Heart right ventricle (tissue), 16 donors: ENCODE measurements at regions of chr12 and their contacts with region 1.

Region 1: DNA sequence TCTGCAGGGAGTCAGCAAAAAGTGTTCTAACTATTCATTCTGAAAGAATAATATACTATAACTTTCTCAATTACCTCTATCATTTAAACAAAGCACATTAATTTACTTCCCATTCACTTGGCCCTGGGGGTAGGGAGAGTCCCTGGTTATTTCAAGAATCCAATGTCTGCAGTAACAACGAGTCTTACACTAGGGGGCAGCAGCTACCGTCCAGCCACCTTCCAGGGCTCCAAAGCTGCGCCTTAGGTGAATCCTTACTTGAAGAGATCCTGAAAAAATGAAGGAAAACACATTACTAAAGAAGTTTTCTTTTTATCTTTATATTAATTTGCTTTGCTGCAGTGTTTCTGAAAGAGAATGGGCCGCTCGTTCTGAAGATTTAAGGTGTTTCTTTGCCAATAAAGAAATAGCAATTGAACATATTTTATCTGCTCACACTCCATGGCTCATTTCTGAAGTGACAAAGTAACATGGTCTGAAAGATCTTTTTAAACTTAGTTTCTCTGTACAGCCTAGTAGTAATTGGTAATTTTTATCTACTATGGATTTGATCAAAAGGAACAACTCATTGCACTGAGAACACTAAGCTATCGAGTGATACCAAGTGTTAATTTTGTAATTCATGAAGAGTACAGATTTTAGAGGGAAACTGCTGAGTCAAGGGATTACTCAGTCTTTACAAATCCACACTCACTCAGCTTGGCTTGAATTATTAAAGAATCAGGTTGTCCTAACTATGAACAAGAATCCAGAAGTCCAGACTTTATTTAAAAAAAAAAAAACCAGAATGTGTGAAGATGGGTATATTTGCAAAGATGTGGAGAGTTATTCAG is 27.6 kb downstream of the BHLHE41 start:
- DNase-seq: peak; percentile 59 to 78
- ATAC-seq: peak; percentile 89 to 98 (median 94)
- H3K4me3 ChIP-seq: no peak overlapping the region
- H3K27ac ChIP-seq: no peak overlapping the region
- H3K4me1 ChIP-seq: peaks cover 0 to 7% (median 0%) of the 10 kb centered on the region in 9 donors
- H3K27me3 ChIP-seq: no peaks in the 10 kb centered on the region
- CTCF ChIP-seq: peak; percentile 85 to 97 (median 95)

Region 2: DNA sequence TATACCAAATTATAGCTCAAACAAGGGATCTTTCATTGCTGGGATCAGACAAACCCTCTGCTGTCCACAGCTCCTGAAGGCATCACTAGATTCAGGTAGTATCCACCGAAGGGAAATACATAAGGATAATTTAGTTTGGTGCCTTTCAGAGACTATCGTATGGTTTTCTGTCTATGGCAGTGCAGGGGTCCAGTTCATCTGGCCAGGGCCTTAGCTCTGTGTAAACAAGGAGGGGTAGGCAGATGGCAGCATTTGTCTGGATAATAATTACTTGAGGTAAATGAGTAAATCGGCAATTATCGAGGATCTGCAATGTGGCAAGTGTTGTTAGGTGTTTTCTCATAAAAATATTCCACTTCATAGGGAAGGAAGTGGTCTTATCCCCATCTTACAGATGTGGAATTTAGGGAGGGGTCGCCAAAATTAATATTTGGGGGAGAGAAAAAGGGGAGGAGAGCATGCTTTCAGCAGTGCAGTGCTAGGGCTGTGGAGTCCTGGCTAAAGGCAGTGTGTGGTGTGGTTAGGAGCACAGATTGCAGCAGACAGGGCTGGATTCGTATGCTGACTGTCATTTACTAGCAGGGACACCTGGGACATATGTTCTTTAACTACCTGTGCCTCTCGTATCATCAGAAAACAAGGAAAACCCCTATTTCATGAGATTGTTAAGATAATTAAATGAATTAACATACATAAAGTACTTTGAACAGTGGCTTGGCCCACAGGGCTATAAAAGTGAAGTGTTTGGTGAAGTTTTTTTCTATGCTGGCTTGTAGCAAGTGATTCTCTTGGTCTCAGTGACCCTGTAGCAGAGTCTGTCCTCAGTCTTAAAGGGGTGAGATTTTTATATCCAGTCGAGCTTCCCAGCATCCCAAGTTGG is 111.7 kb before region 1 on chr12:
- intact Hi-C with region 1: no loop called
- DNase-seq: no peak
- ATAC-seq: no peak
- H3K4me3 ChIP-seq: no peak overlapping the region
- H3K27ac ChIP-seq: no peak overlapping the region
- H3K4me1 ChIP-seq: peaks cover 0 to 54% (median 11%) of the 10 kb centered on the region in 9 donors
- H3K27me3 ChIP-seq: no peaks in the 10 kb centered on the region
- CTCF ChIP-seq: no peak

Region 3: DNA sequence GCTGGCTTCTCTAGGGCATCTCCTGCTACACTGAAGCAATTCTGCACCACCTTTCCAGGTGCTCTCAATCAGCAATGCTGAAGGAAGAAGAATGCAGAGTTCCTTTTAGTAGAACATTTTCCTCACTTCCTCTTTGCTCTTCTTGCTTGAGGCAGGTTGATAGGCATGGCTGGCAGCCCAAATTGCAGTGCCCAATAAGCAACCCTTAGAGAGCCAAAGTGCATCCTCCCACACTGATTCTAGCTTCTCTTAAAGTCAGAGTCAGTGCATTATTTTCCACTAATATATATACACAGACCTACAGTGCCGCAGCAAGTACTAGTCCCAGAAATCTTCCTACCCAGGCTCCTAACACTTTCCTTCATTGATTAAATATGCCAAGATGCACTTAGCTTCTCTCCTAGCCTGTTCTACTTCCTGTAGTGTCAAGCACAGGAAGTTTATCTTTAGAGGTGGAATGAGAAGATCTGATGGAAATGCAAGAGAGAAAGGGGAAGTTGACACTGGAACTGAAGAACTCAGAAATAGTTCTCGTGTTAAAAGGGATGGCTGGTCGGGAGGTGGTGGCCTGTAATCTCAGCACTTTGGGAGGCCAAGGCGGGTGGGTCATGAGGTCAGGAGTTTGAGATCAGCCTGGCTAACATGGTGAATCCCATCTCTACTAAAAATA is 230.8 kb after region 1 on chr12:
- intact Hi-C with region 1: no loop called
- DNase-seq: no peak
- ATAC-seq: no peak
- H3K4me3 ChIP-seq: no peak overlapping the region
- H3K27ac ChIP-seq: no peak overlapping the region
- H3K4me1 ChIP-seq: peaks cover 0 to 20% (median 0%) of the 10 kb centered on the region in 9 donors
- H3K27me3 ChIP-seq: no peaks in the 10 kb centered on the region
- CTCF ChIP-seq: no peak

Region 4: DNA sequence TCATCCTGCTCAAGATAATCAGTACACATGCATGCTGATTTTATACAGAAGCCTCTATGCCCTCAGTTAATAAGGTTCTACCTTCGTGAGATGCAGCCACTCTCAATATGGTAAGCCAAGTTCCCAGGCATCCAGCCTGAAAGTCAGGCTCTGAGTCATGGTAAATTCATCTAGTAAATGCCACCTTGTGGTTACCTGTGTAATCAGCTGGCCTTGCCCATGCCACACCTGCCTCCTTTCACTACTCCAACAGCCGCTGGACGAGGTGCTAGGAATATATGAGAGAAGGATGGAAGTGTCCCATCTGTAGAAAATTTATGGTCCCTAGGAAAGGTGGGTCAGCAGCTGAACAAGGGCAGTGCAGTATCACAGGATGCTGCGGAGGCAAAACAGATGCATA is 305.4 kb after region 1 on chr12:
- intact Hi-C with region 1: loop called in 1 of 10 experiments (anchors 10 kb)
- DNase-seq: no peak
- ATAC-seq: peak in 1 of 8 donors; percentile 53
- H3K4me3 ChIP-seq: no peak overlapping the region
- H3K27ac ChIP-seq: no peak overlapping the region
- H3K4me1 ChIP-seq: no peaks in the 10 kb centered on the region
- H3K27me3 ChIP-seq: no peaks in the 10 kb centered on the region
- CTCF ChIP-seq: peak in 3 of 9 donors; percentile 16 to 31 (median 25)

Region 5: GRCh38 chr12:26696613-26697092 is 599.4 kb after region 1 on chr12:
- intact Hi-C with region 1: loop called in 1 of 10 experiments (anchors 5 kb)
- DNase-seq: no peak
- ATAC-seq: no peak
- H3K4me3 ChIP-seq: no peak overlapping the region
- H3K27ac ChIP-seq: no peak overlapping the region
- H3K4me1 ChIP-seq: no peaks in the 10 kb centered on the region
- H3K27me3 ChIP-seq: no peaks in the 10 kb centered on the region
- CTCF ChIP-seq: no peak